CD4-positive, alpha-beta T cell (primary cell): ENCODE measurements at regions of chr9 and their contacts with region 1.

Region 1: GRCh38 chr9:137254624-137255447 is at the start of gene NELFB:
- DNase-seq: peak; percentile 87 to 98 (median 96)
- ATAC-seq: peak; percentile 94
- H3K4me3 ChIP-seq: peak within 1 kb of the TSS; percentile 90
- H3K4me3 Mint-ChIP-seq: peak within 1 kb of the TSS; percentile 94
- H3K27ac ChIP-seq: no peak within 1 kb of the TSS
- H3K27ac Mint-ChIP-seq: peak within 1 kb of the TSS; percentile 82
- H3K4me1 ChIP-seq: peaks cover 25% of the 10 kb centered on the region
- H3K4me1 Mint-ChIP-seq: peaks cover 16% of the 10 kb centered on the region
- H3K27me3 ChIP-seq: no peaks in the 10 kb centered on the region
- H3K27me3 Mint-ChIP-seq: no peaks in the 10 kb centered on the region
- CTCF ChIP-seq: no peak
- total RNA-seq, gene NELFB: 20.7 to 21.2 TPM

Region 2: GRCh38 chr9:135971892-135972291 is 1282.9 kb before region 1 on chr9:
- CTCF ChIA-PET with region 1: no interaction called
- POLR2A ChIA-PET with region 1: no interaction called
- intact Hi-C with region 1: loop called in 1 of 2 experiments (anchors 5 kb)
- DNase-seq: peak in 11 of 14 experiments; percentile 31 to 83 (median 42)
- ATAC-seq: peak; percentile 70
- H3K4me3 ChIP-seq: no peak overlapping the region
- H3K4me3 Mint-ChIP-seq: no peak overlapping the region
- H3K27ac ChIP-seq: no peak overlapping the region
- H3K27ac Mint-ChIP-seq: no peak overlapping the region
- H3K4me1 ChIP-seq: peaks cover 20% of the 10 kb centered on the region
- H3K4me1 Mint-ChIP-seq: peaks cover 8% of the 10 kb centered on the region
- H3K27me3 ChIP-seq: no peaks in the 10 kb centered on the region
- H3K27me3 Mint-ChIP-seq: peaks cover 4% of the 10 kb centered on the region
- CTCF ChIP-seq: no peak

Region 3: GRCh38 chr9:137353223-137354152 is 98.7 kb after region 1 on chr9:
- CTCF ChIA-PET with region 1: no interaction called
- POLR2A ChIA-PET with region 1: no interaction called
- intact Hi-C with region 1: no loop called
- DNase-seq: peak in 1 of 14 experiments; percentile 15
- ATAC-seq: no peak
- H3K4me3 ChIP-seq: no peak overlapping the region
- H3K4me3 Mint-ChIP-seq: no peak overlapping the region
- H3K27ac ChIP-seq: no peak overlapping the region
- H3K27ac Mint-ChIP-seq: no peak overlapping the region
- H3K4me1 ChIP-seq: no peaks in the 10 kb centered on the region
- H3K4me1 Mint-ChIP-seq: no peaks in the 10 kb centered on the region
- H3K27me3 ChIP-seq: no peaks in the 10 kb centered on the region
- H3K27me3 Mint-ChIP-seq: no peaks in the 10 kb centered on the region
- CTCF ChIP-seq: no peak